Heart left ventricle (tissue), 16 donors: ENCODE measurements at regions of chr3 and their contacts with region 1.

Region 1: GRCh38 chr3:195259475-195260279 is 11.3 kb downstream of the XXYLT1 start:
- DNase-seq: peak; percentile 91 to 94 (median 93)
- ATAC-seq: peak; percentile 70 to 90 (median 88)
- H3K4me3 ChIP-seq: peak overlapping the region; percentile 21 to 78 (median 68)
- H3K27ac ChIP-seq: peak overlapping the region; percentile 80 to 97 (median 91)
- H3K4me1 ChIP-seq: peaks cover 0 to 37% (median 22%) of the 10 kb centered on the region in 12 donors
- H3K27me3 ChIP-seq: no peaks in the 10 kb centered on the region
- CTCF ChIP-seq: peak in 11 of 12 donors; percentile 15 to 99 (median 81)
- POLR2A ChIP-seq: peak in 1 of 2 donors; percentile 55

Region 2: DNA sequence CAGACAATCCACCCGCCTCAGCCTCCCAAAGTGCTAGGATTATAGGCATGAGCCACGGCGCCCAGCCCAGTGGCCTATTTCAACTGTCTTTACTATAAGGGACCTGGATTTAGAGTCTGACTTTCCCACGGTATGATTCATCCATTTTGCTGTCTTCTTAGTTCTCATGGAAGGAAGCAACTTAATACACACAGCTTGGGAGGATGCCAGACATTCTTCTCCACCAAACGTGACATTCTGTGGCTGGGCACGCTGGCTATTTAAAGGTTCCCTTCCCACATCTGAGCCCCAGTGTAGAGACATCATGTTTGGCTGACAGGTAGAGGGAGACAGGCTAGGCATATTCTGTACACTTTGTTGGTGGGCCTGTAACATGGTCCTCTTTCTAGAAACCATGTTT is 547.8 kb before region 1 on chr3:
- intact Hi-C with region 1: no loop called
- DNase-seq: peak in 4 of 5 donors; percentile 51 to 76 (median 64)
- ATAC-seq: peak; percentile 67 to 92 (median 90)
- H3K4me3 ChIP-seq: no peak overlapping the region
- H3K27ac ChIP-seq: peak overlapping the region in 4 of 12 donors; percentile 8 to 54 (median 16)
- H3K4me1 ChIP-seq: peaks cover 0 to 13% (median 9%) of the 10 kb centered on the region in 12 donors
- H3K27me3 ChIP-seq: no peaks in the 10 kb centered on the region
- CTCF ChIP-seq: peak in 3 of 12 donors; percentile 17 to 23 (median 17)
- POLR2A ChIP-seq: no peak

Region 3: GRCh38 chr3:194769020-194769643 is 490.5 kb before region 1 on chr3:
- intact Hi-C with region 1: loop called in 1 of 10 experiments (anchors 5 kb)
- DNase-seq: peak; percentile 91 to 97 (median 92)
- ATAC-seq: peak; percentile 98 to 99 (median 99)
- H3K4me3 ChIP-seq: peak overlapping the region in 10 of 12 donors; percentile 26 to 60 (median 45)
- H3K27ac ChIP-seq: peak overlapping the region in 10 of 12 donors; percentile 6 to 66 (median 49)
- H3K4me1 ChIP-seq: peaks cover 0 to 45% (median 18%) of the 10 kb centered on the region in 12 donors
- H3K27me3 ChIP-seq: no peaks in the 10 kb centered on the region
- CTCF ChIP-seq: peak in 1 of 12 donors; percentile 4
- POLR2A ChIP-seq: no peak

Region 4: DNA sequence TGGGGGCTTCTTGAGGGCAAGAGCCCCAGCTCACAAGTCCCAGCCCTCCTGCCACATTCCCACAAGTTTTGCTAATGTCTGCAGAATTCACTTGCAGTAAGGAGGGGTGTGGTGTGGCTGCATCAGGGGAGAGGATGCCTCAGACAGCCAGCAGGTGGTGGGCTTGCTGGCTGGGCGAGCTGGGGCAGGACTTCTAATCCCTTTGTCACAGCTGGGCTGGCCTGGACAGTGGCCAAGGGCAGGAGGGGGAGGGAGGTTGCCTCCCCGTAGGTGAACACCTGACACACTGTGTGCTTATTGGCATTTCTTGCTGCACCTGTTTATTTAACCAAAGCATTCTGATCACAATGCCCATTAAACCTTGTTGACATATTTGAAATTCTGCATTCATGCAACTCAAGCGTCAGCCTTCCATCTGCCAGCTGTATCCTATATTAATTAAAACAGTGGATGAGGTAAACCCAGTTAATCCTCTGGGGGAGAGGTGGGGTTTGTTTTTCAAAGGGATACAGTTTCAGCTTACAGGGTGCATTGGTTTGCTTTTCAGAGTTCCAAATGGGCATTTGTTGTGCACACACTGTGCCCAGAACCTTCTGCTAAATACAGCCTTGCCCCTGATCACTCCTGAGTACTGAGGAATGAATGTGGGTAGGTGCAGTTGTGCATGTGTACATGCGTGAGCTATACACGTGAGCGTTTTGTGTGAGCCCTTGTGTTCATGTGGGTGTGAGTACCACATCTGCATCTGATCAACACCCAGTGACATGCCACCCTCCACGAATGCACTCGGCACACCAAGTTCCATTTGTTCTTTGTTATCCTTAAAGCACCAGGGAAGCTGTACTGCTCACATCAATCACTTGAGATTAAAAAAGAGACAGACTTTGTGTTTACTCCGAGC is 257.5 kb before region 1 on chr3:
- intact Hi-C with region 1: loop called in 8 of 10 experiments (anchors 2 to 10 kb)
- DNase-seq: peak; percentile 66 to 83 (median 68)
- ATAC-seq: peak; percentile 71 to 82 (median 72)
- H3K4me3 ChIP-seq: peak overlapping the region in 1 of 12 donors; percentile 7
- H3K27ac ChIP-seq: peak overlapping the region in 10 of 12 donors; percentile 3 to 71 (median 33)
- H3K4me1 ChIP-seq: peaks cover 0 to 28% (median 16%) of the 10 kb centered on the region in 12 donors
- H3K27me3 ChIP-seq: no peaks in the 10 kb centered on the region
- CTCF ChIP-seq: peak; percentile 34 to 74 (median 68)
- POLR2A ChIP-seq: no peak

Region 5: GRCh38 chr3:195117978-195118581 is 141.6 kb before region 1 on chr3:
- intact Hi-C with region 1: loop called in 7 of 10 experiments (anchors 2 to 10 kb)
- DNase-seq: no peak
- ATAC-seq: peak in 2 of 4 donors; percentile 37 to 38
- H3K4me3 ChIP-seq: no peak overlapping the region
- H3K27ac ChIP-seq: peak overlapping the region in 4 of 12 donors; percentile 15 to 52 (median 33)
- H3K4me1 ChIP-seq: peaks cover 0 to 36% (median 17%) of the 10 kb centered on the region in 12 donors
- H3K27me3 ChIP-seq: no peaks in the 10 kb centered on the region
- CTCF ChIP-seq: peak in 7 of 12 donors; percentile 6 to 41 (median 28)
- POLR2A ChIP-seq: no peak

Region 6: DNA sequence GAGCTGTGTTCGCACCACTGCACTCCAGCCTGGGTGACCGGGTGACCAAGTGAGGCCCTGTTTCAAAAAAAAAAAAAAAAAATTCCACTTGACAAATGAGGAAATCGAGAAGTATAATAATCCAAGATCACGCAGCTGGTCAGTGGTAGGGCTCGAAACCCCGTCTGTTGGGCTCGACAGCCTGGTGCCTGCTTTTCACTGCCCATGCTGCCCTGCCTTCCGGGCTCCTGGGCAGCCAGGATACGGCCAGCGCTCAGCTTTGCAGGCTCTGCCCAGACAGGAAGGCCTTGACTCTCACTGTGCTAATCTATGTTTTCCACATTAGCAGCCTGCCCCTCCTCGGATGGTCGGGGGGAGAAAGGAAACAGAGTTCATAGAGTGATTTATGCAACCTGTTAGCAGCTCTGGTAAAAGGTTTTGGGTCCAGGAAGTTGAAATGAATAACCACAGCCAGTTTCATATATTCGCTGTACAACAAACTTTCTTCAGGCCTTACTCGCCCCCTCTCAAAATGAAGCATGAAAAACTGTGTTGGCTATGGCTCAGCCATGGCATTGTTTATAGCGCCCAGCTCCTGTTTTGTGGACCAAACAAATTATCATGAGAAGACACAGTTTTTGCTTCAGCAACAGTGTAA is 97.5 kb before region 1 on chr3:
- intact Hi-C with region 1: loop called in 3 of 10 experiments (anchors 10 kb)
- DNase-seq: no peak
- ATAC-seq: peak in 2 of 4 donors; percentile 57 to 66
- H3K4me3 ChIP-seq: no peak overlapping the region
- H3K27ac ChIP-seq: peak overlapping the region in 9 of 12 donors; percentile 17 to 71 (median 44)
- H3K4me1 ChIP-seq: peaks cover 0 to 54% (median 21%) of the 10 kb centered on the region in 12 donors
- H3K27me3 ChIP-seq: no peaks in the 10 kb centered on the region
- CTCF ChIP-seq: no peak
- POLR2A ChIP-seq: no peak